Cardiac septum (tissue), 1 donor: ENCODE measurements at regions of chr19 and their contacts with region 1.

Region 1: DNA sequence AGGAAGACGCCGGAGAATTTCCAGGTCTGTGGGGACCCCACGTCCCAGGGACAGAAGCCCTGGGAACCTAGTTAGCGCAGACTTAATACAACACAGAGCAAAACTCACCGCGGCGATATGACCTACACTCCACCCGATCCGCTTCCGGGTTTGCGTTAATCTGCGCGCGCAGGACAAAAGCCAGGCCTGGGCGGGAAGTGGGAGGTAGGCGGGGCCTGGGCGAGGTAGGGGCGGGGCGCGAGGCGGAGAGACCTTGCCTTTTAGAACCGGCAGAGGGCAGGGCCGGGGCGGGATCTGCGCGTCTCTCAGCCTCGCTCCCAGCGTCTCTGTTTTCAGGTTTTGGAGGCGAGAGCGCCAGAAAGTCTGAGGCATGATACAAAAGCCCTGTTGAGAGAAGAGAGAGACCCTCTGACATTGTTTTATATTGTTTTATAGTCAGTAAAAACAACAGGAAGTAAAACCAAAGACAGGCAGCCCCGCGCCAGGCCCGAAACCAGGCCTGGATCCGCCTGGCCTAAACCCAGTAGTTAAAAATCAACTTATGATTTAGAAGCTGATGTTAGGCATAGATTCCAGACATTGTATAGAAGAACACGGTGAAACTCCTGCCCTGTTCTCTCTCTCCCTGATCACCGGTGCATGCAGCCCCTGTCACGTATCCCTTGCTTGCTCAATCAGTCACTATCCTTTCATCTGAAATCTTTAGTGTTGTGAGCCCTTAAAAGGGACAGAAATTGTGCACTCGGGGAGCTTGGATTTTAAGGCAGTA is at the start of gene ZNF611:
- DNase-seq: peak; percentile 99
- total RNA-seq, gene ZNF611: 6.8 TPM

Region 2: GRCh38 chr19:52570000-52570861 is 164.8 kb before region 1 on chr19 and contains the start of gene ZNF701:
- intact Hi-C with region 1: no loop called
- DNase-seq: peak; percentile 98
- total RNA-seq, gene ZNF701: 20.7 TPM

Region 3: GRCh38 chr19:52637718-52638585 is 97.1 kb before region 1 on chr19 and contains the start of gene ZNF83:
- intact Hi-C with region 1: loop called (anchors 5 kb)
- DNase-seq: peak; percentile 95
- total RNA-seq, gene ZNF83: 16.8 TPM

Region 4: GRCh38 chr19:52690369-52691214 is 44.5 kb before region 1 on chr19:
- intact Hi-C with region 1: loop called (anchors 2 kb)
- DNase-seq: peak; percentile 96